Caco-2 (cell line): ENCODE measurements at regions of chr17 and their contacts with region 1.

Region 1: DNA sequence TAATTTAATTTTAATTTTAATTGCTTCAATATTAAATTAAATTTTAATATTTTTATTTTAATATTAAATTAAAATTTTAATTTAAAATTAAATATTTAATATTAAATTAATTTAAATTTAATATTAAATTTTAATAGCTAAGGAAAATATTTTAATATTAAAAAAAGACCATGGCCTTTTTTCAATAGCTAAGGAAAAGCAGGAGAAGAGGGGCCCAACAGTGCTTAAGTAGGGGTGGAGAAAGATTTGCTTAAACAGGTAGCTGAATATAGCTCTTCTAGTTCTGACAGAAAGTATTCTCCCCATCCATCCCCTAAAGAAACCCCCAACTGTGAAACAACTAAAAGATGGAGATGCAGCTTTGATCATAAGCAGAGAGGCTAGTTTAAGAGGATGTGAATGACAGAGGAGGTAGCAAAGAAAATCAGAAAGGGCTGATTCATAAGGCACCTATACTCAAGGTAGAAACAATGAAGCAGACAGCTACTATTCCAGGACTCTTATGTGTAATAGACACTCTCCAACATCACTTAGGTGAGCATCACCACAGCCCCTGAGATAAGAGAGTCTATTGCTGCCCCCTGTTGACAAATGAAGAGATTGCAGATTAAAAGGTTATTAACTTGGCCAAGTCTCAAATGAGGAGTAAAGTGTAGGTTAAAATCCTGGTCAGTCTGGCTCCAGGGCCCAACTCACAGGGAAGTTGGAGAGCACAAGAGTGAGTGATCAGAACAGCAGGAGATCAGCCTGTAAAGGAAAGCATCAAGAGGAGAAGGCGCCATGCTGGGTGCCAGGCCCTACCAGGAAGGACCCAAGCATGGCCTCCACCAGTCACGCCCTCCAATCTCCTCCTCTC is 7.8 kb upstream of the RNASEK start:
- DNase-seq: peak in 1 of 2 experiments; percentile 62
- H3K4me3 ChIP-seq: no peak overlapping the region
- H3K4me3 Mint-ChIP-seq: no peak overlapping the region
- H3K27ac Mint-ChIP-seq: no peak overlapping the region
- H3K4me1 ChIP-seq: no peaks in the 10 kb centered on the region
- H3K4me1 Mint-ChIP-seq: no peaks in the 10 kb centered on the region
- H3K27me3 ChIP-seq: no peaks in the 10 kb centered on the region
- H3K27me3 Mint-ChIP-seq: no peaks in the 10 kb centered on the region
- CTCF ChIP-seq: peak; percentile 27 to 34

Region 2: GRCh38 chr17:6913608-6914443 is 90.8 kb before region 1 on chr17:
- CTCF ChIA-PET with region 1: interaction called, 9 read pairs
- POLR2A ChIA-PET with region 1: no interaction called
- intact Hi-C with region 1: loop called (anchors 1 kb)
- DNase-seq: peak; percentile 60 to 69
- H3K4me3 ChIP-seq: peak overlapping the region; percentile 26
- H3K4me3 Mint-ChIP-seq: peak overlapping the region; percentile 76
- H3K27ac Mint-ChIP-seq: no peak overlapping the region
- H3K4me1 ChIP-seq: no peaks in the 10 kb centered on the region
- H3K4me1 Mint-ChIP-seq: no peaks in the 10 kb centered on the region
- H3K27me3 ChIP-seq: no peaks in the 10 kb centered on the region
- H3K27me3 Mint-ChIP-seq: peaks cover 10% of the 10 kb centered on the region
- CTCF ChIP-seq: peak; percentile 53 to 61